A549 (cell line): ENCODE measurements at regions of chr16 and their contacts with region 1.

Region 1: DNA sequence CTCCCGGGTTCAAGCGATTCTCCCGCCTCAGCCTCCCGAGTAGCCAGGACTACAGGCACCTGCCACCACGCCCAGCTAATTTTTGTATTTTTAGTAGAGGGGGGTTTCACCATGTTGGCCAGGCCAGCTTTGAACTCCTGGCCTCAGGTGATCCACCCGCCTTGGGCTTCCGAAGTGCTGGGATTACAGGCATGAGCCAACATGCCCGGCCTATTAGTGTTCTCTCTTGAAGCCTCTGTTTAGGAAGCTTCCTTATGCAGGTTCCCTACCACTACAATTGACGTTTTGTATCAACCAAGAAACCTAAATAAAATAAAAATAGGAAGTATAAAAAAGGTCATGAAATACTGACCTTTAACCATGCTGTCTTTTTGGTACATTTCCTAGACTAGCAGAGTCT is 16.0 kb downstream of the CHST5 start:
- DNase-seq: no peak
- ATAC-seq: no peak
- H3K4me3 ChIP-seq: no peak overlapping the region
- H3K27ac ChIP-seq: no peak overlapping the region
- H3K4me1 ChIP-seq: no peaks in the 10 kb centered on the region; the same call in 2 of the 3 replicates
- CTCF ChIP-seq: no peak
- EP300 ChIP-seq: no peak
- POLR2A ChIP-seq: no peak
- RAD21 ChIP-seq: no peak

Region 2: GRCh38 chr16:75432828-75433731 is 86.8 kb before region 1 on chr16 and contains the start of gene CFDP1:
- CTCF ChIA-PET with region 1: interaction called, 3 read pairs
- POLR2A ChIA-PET with region 1: interaction called, 10 read pairs
- DNase-seq: peak; percentile 95 to 98
- ATAC-seq: peak; percentile 92 to 93
- H3K4me3 ChIP-seq: peak within 1 kb of the TSS; percentile 81
- H3K27ac ChIP-seq: peak within 1 kb of the TSS; percentile 75 to 95
- H3K4me1 ChIP-seq: peaks cover 10% of the 10 kb centered on the region; the same call in 1 of the 3 replicates
- CTCF ChIP-seq: no peak
- EP300 ChIP-seq: no peak
- POLR2A ChIP-seq: peak; percentile 68
- RAD21 ChIP-seq: no peak
- polyA plus RNA-seq, gene CFDP1: 47.2 and 70.2 TPM in 2 replicates

Region 3: GRCh38 chr16:75464130-75464918 is 55.6 kb before region 1 on chr16 and contains the start of gene TMEM170A:
- CTCF ChIA-PET with region 1: interaction called, 209 read pairs
- POLR2A ChIA-PET with region 1: interaction called, 3 read pairs
- DNase-seq: peak; percentile 94 to 99
- ATAC-seq: peak; percentile 95 to 98
- H3K4me3 ChIP-seq: peak within 1 kb of the TSS; percentile 97
- H3K27ac ChIP-seq: peak within 1 kb of the TSS; percentile 94 to 95
- H3K4me1 ChIP-seq: peaks cover 20% of the 10 kb centered on the region; the same call in 2 of the 3 replicates
- CTCF ChIP-seq: peak; percentile 100
- EP300 ChIP-seq: no peak
- POLR2A ChIP-seq: peak; percentile 98
- RAD21 ChIP-seq: peak; percentile 53 to 74
- polyA plus RNA-seq, gene TMEM170A: 21.2 and 21.7 TPM in 2 replicates

Region 4: GRCh38 chr16:75495076-75495674 is 24.7 kb before region 1 on chr16 and contains the start of gene CHST6:
- CTCF ChIA-PET with region 1: interaction called, 41 read pairs
- POLR2A ChIA-PET with region 1: interaction called, 3 read pairs
- DNase-seq: peak in 1 of 2 experiments; percentile 17
- ATAC-seq: peak; percentile 47 to 82; a peak in 4 of 6 replicates
- H3K4me3 ChIP-seq: peak within 1 kb of the TSS; percentile 44
- H3K27ac ChIP-seq: peak within 1 kb of the TSS; percentile 60 to 83; a peak in 5 of 6 replicates
- H3K4me1 ChIP-seq: 0 out of 3 replicates have a peak, but pooled peaks cover 3% of the 10 kb centered on the region
- CTCF ChIP-seq: no peak
- EP300 ChIP-seq: no peak
- POLR2A ChIP-seq: no peak; the same call in 1 of the 2 replicates
- RAD21 ChIP-seq: no peak
- polyA plus RNA-seq, gene CHST6: 0.37 and 0.57 TPM in 2 replicates

Region 5: DNA sequence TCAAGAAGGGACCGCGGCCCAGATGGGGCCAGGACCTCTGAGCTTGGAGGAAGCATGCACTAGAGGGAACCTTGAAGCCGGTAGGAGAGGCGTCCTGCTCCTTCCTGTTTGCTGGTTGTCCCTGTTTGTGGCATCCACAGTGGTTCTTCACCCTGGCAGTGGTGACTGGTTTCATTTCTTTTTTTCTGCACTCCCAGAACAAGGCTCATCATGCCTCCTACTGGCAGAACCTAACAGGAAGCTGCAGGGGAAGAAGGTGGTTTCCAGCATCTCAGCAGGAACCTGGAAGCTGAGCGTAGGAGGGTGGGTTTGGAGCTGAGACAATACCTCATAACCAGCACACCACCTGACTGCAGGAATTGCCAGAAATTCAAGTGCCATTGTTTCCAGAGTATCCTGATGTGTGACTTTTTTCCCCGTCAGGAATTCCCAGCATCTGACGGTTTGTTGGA is 30.4 kb after region 1 on chr16:
- CTCF ChIA-PET with region 1: interaction called, 51 read pairs
- POLR2A ChIA-PET with region 1: interaction called, 3 read pairs
- DNase-seq: peak; percentile 49 to 61
- ATAC-seq: peak; percentile 55 to 56; a peak in 4 of 6 replicates
- H3K4me3 ChIP-seq: no peak overlapping the region
- H3K27ac ChIP-seq: no peak overlapping the region
- H3K4me1 ChIP-seq: peaks cover 6% of the 10 kb centered on the region; the same call in 2 of the 3 replicates
- CTCF ChIP-seq: no peak; the same call in 1 of the 3 replicates
- EP300 ChIP-seq: no peak
- POLR2A ChIP-seq: no peak
- RAD21 ChIP-seq: peak in 1 of 2 experiments; percentile 65; a peak in 2 of 5 replicates

Region 6: DNA sequence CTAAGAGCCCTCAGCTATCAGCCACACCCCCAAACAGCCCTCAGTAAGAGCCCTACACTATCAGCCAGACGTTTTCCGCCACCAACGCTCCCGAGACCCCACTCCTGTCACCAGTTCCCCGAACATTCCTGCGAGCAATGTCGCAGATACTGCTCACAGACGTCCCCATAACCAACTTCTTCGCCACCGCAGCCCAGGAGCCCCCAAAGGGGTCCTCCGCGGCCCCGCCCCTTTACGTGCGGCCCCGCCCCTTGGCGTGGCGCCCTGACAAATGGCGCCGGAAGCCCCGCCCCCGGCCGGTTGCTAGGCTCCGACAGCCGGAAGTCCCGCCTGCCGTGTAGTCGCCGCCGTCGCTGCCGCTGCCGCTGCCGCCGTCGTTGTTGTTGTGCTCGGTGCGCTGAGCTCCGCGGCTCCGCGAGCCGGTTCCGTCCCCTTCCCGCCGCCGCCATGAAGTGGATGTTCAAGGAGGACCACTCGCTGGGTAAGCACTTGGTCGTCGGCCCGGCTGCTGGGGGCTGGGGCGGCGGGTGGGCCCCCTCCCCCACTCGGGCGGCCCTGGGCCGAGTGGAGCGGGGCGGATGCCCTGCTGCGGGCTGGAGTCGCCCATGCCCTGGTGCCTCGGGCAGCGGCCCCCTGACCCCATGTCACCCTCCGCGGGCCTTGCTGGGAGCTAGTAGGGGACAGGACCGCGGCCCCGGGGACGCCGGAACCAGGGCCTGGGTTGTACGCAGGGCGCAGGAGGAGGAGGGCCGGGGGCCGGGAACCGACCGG is 46.3 kb after region 1 on chr16 and contains the start of gene GABARAPL2:
- CTCF ChIA-PET with region 1: interaction called, 18 read pairs
- POLR2A ChIA-PET with region 1: interaction called, 3 read pairs
- DNase-seq: peak; percentile 74 to 76
- ATAC-seq: peak; percentile 87 to 91
- H3K4me3 ChIP-seq: peak within 1 kb of the TSS; percentile 76
- H3K27ac ChIP-seq: peak within 1 kb of the TSS; percentile 79 to 92
- H3K4me1 ChIP-seq: peaks cover 15% of the 10 kb centered on the region
- CTCF ChIP-seq: no peak
- EP300 ChIP-seq: no peak
- POLR2A ChIP-seq: peak; percentile 61
- RAD21 ChIP-seq: no peak
- polyA plus RNA-seq, gene GABARAPL2: 80.6 and 84.8 TPM in 2 replicates

Region 7: GRCh38 chr16:75679366-75679765 is 159.5 kb after region 1 on chr16:
- CTCF ChIA-PET with region 1: no interaction called
- POLR2A ChIA-PET with region 1: no interaction called
- DNase-seq: no peak
- ATAC-seq: no peak
- H3K4me3 ChIP-seq: no peak overlapping the region
- H3K27ac ChIP-seq: no peak overlapping the region
- H3K4me1 ChIP-seq: no peaks in the 10 kb centered on the region
- CTCF ChIP-seq: no peak
- EP300 ChIP-seq: no peak
- POLR2A ChIP-seq: no peak
- RAD21 ChIP-seq: no peak